K562 (cell line): ENCODE measurements at regions of chr7 and their contacts with region 1.

Region 1: DNA sequence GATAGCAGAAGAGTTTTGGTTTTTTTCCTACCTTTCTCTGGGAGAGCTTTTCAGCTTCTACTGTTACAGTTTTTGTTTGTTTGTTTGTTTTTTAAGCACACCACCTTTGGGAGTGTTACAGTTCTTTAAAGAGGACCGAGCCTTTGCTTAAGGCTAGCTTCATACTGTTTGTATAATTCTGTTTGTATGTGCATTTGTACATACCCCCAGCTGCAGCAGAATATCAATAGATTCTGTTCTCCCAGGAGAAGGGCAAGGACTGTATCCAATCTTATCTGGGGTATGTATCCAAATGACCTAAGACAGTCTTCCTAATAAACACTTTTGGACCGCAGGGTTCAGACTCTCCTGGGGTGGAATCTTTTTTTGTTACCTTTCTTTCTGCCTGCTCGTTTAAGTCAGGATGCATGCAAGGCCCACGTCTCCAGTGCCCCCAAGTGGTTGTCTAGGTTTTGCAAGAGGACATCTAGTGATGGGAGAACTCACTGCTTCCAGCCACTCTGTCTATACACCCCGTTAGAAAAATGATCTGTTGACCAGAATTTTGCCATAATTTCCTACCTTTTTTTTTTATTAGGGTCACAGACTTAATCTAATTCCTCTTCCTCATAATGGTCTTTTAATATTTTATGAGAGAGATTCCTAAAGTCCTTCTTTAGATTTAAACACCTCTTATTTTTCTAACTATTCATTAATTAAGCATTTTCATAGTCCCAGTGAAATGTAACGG is 23.9 kb downstream of the NRF1 start:
- DNase-seq: peak; percentile 76 to 85 (median 82)
- ATAC-seq: peak; percentile 100
- H3K4me3 ChIP-seq: no peak overlapping the region
- H3K27ac ChIP-seq: no peak overlapping the region
- H3K4me1 ChIP-seq: no peaks in the 10 kb centered on the region
- H3K27me3 ChIP-seq: no peaks in the 10 kb centered on the region
- CTCF ChIP-seq: peak; percentile 94 to 99 (median 99)
- EP300 ChIP-seq: no peak
- POLR2A ChIP-seq: no peak
- RAD21 ChIP-seq: peak; percentile 88 to 93

Region 2: GRCh38 chr7:129343099-129343700 is 292.3 kb before region 1 on chr7:
- CTCF ChIA-PET with region 1: interaction called, 7 read pairs
- POLR2A ChIA-PET with region 1: no interaction called
- in situ Hi-C with region 1: no loop called
- intact Hi-C with region 1: loop called (anchors 2 kb)
- DNase-seq: peak; percentile 56 to 77 (median 60)
- ATAC-seq: peak; percentile 93
- H3K4me3 ChIP-seq: no peak overlapping the region
- H3K27ac ChIP-seq: no peak overlapping the region
- H3K4me1 ChIP-seq: peaks cover 0 to 9% of the 10 kb centered on the region in 2 experiments; a peak in 2 of 5 replicates
- H3K27me3 ChIP-seq: no peaks in the 10 kb centered on the region
- CTCF ChIP-seq: peak; percentile 68 to 96 (median 72); a peak in 5 of 6 replicates
- EP300 ChIP-seq: no peak
- POLR2A ChIP-seq: no peak
- RAD21 ChIP-seq: peak; percentile 86 to 88

Region 3: GRCh38 chr7:129401967-129402860 is 233.3 kb before region 1 on chr7:
- CTCF ChIA-PET with region 1: interaction called, 3 read pairs
- POLR2A ChIA-PET with region 1: no interaction called
- in situ Hi-C with region 1: no loop called
- intact Hi-C with region 1: loop called (anchors 1 kb)
- DNase-seq: peak in 2 of 4 experiments; percentile 55 to 70
- ATAC-seq: peak; percentile 84
- H3K4me3 ChIP-seq: no peak overlapping the region
- H3K27ac ChIP-seq: peak overlapping the region; percentile 65; the same call in 2 of the 3 replicates
- H3K4me1 ChIP-seq: peaks cover 6 to 21% of the 10 kb centered on the region in 2 experiments; a peak in 4 of 5 replicates
- H3K27me3 ChIP-seq: no peaks in the 10 kb centered on the region
- CTCF ChIP-seq: peak; percentile 67 to 86 (median 68)
- EP300 ChIP-seq: no peak
- POLR2A ChIP-seq: no peak
- RAD21 ChIP-seq: peak; percentile 73 to 84

Region 4: DNA sequence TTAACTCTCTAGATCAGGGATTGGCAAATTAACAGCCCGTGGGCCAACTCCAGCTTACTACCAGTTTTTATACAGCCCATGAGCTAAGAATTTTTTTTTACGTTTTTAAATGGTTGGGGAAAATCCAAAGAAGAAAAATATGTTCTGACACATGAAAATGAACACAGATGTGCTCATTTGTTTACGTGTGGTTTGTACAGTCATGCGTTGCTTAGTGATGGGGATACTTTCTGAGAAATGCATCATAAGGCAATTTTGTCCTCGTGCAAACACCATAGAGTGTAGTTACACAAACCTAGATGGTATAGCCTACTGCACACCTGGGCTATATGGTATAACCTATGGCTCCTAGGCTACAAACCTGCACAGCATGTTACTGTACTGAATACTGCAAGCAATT is 141.4 kb before region 1 on chr7:
- CTCF ChIA-PET with region 1: no interaction called
- POLR2A ChIA-PET with region 1: no interaction called
- in situ Hi-C with region 1: no loop called
- intact Hi-C with region 1: loop called (anchors 5 kb)
- DNase-seq: no peak
- ATAC-seq: no peak
- H3K4me3 ChIP-seq: no peak overlapping the region
- H3K27ac ChIP-seq: no peak overlapping the region
- H3K4me1 ChIP-seq: no peaks in the 10 kb centered on the region; a peak in 1 of 5 replicates
- H3K27me3 ChIP-seq: no peaks in the 10 kb centered on the region
- CTCF ChIP-seq: no peak
- EP300 ChIP-seq: no peak
- POLR2A ChIP-seq: no peak
- RAD21 ChIP-seq: no peak

Region 5: DNA sequence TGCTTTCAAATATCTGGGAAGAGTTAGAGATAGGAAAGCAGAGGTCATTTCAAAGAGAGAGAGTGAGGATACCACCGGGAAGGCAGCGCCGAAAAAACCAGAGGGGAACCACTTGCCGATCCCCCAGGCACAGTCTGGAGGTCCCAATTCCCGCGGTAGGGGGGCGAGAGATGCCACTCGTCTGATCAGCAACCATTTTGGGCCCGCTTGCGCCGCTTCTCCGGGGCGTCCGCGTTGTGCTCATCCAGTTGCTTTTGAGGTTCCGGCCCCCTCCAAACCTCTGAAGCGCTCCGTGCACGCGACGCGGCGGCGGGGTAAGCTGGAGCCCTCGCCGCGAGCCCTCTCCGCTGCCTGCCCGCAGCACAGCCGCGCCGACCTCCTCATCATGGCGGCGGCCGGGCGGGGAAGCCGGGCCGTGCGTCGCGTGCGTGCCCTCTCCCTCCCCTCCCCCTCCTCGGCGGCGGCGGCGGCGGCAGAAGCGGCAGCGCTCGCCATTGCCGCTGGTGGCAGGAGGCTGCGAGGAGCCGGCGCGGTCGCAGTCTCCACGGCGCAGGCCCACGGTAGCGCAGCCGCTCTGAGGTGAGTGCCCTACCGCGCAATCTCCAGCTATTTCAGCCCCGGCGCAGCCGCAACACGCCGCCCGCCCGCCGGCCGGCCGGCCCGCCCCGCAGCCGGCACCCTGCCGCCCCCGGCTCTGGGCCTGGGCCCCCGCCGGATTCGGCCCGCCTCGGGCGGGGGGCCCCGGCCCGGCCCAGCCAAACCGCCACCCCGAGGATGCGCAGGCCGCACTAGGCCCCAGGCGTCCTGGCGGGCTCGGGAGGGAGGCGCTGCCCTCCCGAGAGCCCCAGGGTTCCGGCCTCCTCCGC is 24.0 kb before region 1 on chr7 and contains the start of gene NRF1:
- CTCF ChIA-PET with region 1: interaction called, 4 read pairs
- POLR2A ChIA-PET with region 1: interaction called, 5 read pairs
- in situ Hi-C with region 1: no loop called
- intact Hi-C with region 1: loop called (anchors 1 kb)
- DNase-seq: peak; percentile 93 to 97 (median 94)
- ATAC-seq: peak; percentile 92
- H3K4me3 ChIP-seq: peak within 1 kb of the TSS; percentile 78
- H3K27ac ChIP-seq: peak within 1 kb of the TSS; percentile 93
- H3K4me1 ChIP-seq: peaks cover 18 to 33% of the 10 kb centered on the region in 2 experiments
- H3K27me3 ChIP-seq: no peaks in the 10 kb centered on the region
- CTCF ChIP-seq: peak; percentile 14 to 53 (median 41); a peak in 3 of 6 replicates
- EP300 ChIP-seq: peak; percentile 36; the same call in 1 of the 2 replicates
- POLR2A ChIP-seq: peak; percentile 93
- RAD21 ChIP-seq: no peak
- polyA plus RNA-seq, gene NRF1: 8.6 to 8.9 TPM

Region 6: DNA sequence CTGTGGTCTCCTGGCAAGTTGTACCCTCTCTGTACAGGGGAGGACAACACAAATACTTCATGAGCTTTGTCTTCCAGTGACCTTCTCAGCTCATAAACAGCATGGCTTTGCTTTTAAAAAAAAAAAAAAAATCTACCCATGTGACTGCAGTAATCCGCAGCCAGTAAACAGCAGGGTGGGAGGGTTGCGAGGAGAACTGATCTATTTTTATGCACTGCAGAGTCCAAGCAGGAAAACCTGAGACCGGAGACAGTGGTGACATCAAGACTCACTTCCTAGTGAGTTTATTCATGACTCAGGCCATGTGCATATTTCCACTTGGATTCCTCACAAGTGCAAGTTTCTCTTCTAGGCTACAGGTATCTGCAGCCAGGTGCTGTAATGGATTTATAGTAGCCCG is 104.0 kb after region 1 on chr7:
- CTCF ChIA-PET with region 1: no interaction called
- POLR2A ChIA-PET with region 1: no interaction called
- in situ Hi-C with region 1: no loop called
- intact Hi-C with region 1: no loop called
- DNase-seq: no peak
- ATAC-seq: peak; percentile 20; the same call in 1 of the 3 replicates
- H3K4me3 ChIP-seq: no peak overlapping the region
- H3K27ac ChIP-seq: no peak overlapping the region
- H3K4me1 ChIP-seq: no peaks in the 10 kb centered on the region; a peak in 1 of 5 replicates
- H3K27me3 ChIP-seq: no peaks in the 10 kb centered on the region
- CTCF ChIP-seq: no peak
- EP300 ChIP-seq: no peak
- POLR2A ChIP-seq: no peak
- RAD21 ChIP-seq: no peak